HEK293T (cell line): ENCODE measurements at regions of chrX and their contacts with region 1.

Region 1: GRCh38 chrX:71532753-71533425 is at the start of gene OGT:
- DNase-seq: peak; percentile 80

Region 2: DNA sequence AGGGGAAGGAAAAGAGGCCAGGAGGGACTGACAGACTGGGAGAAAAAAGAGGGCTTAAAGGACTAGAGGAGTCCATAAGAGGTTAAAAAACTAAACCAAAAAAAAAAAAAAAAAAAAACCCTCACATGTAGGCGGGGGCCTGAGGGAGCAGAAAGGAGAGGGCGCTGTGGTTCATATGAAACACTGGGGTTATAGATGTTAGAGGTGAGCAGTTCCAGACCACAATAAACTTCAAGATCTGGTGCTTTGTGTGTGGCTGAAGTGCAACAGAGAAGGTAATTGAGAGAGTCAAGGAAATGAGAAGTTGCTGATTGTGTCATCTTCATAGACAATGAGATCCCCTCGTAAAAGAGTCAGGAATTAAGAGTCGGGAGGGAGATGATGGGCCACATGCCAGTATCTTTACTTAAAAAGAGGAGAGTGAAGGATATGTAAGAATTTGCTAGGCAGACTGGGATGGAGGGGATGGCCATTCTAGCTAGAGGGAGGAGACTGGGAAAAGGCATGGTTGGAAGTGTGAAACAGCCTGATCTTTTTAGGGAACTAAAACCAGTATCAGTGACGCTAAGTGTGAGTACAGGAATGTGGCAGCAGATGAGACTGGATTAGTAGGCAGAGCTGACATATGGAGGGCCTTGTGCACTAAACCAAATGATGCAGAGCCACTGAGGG is 18.4 kb before region 1 on chrX:
- CTCF ChIA-PET with region 1: interaction called, 3 read pairs
- POLR2A ChIA-PET with region 1: interaction called, 35 read pairs
- DNase-seq: no peak

Region 3: DNA sequence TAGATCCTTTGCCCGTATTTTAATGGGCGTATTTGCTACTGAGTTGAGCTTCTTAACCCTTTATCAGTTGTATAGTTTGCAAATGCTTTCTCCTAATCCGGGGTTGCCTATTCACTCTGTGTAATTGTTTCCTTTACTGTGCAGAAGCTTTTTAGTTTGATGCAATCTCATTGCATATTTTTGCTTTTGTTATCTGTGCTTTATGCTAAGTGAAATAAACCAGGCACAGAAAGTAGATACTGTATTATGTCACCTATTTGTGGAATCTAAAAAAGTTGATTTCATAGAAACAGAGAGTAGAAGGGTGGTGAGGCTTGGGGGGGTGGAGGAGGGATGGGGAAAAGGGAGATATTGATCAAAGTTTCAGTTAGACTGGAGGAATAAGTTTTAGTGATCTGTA is 17.7 kb after region 1 on chrX:
- CTCF ChIA-PET with region 1: no interaction called
- POLR2A ChIA-PET with region 1: interaction called, 41 read pairs
- DNase-seq: no peak

Region 4: DNA sequence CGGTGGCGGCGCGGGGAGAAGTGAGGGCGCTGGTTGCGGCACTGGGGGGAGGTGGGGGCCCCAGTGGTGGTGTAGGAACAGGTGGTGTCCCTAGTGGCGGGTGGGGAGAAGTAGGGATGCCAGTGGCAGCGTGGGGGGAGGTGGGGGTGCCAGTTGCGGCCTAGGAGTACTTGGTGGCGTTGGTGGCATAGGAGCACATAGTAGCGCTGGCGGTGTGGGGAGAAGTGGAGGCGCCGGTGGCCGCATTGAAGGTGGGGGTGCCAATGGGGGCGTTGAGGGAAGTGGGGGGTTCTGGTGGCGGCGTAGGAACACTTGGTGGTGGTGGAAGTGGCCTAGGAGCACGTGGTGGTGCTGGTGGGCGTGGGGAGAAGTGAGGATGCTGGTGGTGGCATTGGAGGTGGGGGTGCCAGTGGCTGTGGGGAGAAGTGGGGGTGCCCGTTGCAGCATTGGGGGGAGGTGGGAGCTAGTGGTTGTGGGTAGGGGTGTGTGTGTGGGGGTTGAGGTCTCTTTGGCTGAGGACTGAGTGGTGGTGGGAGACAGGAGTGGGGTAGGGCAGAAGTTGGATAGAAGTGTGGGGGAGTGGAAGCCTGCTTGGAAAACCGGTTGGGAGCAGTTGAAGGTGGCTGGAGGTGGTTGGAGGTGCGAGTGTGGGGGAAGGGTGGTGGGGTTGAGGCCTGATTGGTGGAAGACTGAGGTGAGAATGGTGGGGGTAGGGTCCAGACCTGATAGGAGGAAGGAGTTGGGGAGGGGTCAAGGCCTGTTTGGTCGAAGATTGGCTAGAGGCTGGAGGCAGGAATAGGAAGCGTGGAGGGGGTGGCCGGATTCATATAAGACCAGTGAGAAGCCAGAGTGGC is 46.5 kb after region 1 on chrX:
- CTCF ChIA-PET with region 1: no interaction called
- POLR2A ChIA-PET with region 1: no interaction called
- DNase-seq: no peak